ENCODE measurements at regions of chr3 and their contacts with region 1.

Region 1: DNA sequence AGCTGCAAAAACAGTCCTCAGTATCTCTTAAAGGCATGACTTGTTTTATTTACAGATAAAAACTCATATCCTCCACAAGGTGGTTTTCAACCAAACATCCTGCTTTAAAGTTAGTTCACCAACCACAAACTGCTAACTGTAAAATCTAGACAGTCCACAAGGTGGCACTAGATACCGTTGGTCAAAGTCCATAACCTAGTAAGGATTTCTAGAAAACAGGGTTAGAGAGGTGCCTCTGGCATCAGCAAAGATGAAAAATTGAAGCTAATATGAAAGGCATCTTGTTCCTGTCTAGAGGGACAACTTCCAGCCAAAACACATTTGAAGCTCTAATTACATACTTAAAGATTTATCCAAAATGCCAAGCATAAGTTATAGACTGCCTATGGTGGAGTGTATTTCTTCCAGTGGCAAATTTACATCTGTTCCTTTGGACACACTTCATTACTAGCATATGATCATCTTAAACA is 56.0 kb downstream of the ZMAT3 start:
- DNase-seq: peak; percentile 49
- H3K4me3 Mint-ChIP-seq: no peak overlapping the region
- H3K27ac Mint-ChIP-seq: peak overlapping the region; percentile 44
- H3K4me1 Mint-ChIP-seq: peaks cover 33% of the 10 kb centered on the region
- H3K27me3 Mint-ChIP-seq: no peaks in the 10 kb centered on the region

Region 2: GRCh38 chr3:178986456-178986855 is 29.1 kb before region 1 on chr3:
- CTCF ChIA-PET with region 1: no interaction called
- POLR2A ChIA-PET with region 1: no interaction called
- intact Hi-C with region 1: no loop called
- DNase-seq: no peak
- H3K4me3 Mint-ChIP-seq: no peak overlapping the region
- H3K27ac Mint-ChIP-seq: no peak overlapping the region
- H3K4me1 Mint-ChIP-seq: no peaks in the 10 kb centered on the region
- H3K27me3 Mint-ChIP-seq: no peaks in the 10 kb centered on the region

Region 3: GRCh38 chr3:179000144-179000543 is 15.4 kb before region 1 on chr3:
- CTCF ChIA-PET with region 1: interaction called, 6 read pairs
- POLR2A ChIA-PET with region 1: interaction called, 4 read pairs
- intact Hi-C with region 1: loop called (anchors 1 kb)
- DNase-seq: no peak
- H3K4me3 Mint-ChIP-seq: no peak overlapping the region
- H3K27ac Mint-ChIP-seq: no peak overlapping the region
- H3K4me1 Mint-ChIP-seq: peaks cover 9% of the 10 kb centered on the region
- H3K27me3 Mint-ChIP-seq: peaks cover 2% of the 10 kb centered on the region

Region 4: GRCh38 chr3:179037351-179037750 is 21.8 kb after region 1 on chr3:
- CTCF ChIA-PET with region 1: interaction called, 12 read pairs
- POLR2A ChIA-PET with region 1: no interaction called
- intact Hi-C with region 1: loop called (anchors 1 kb)
- DNase-seq: peak; percentile 84
- H3K4me3 Mint-ChIP-seq: peak overlapping the region; percentile 55
- H3K27ac Mint-ChIP-seq: peak overlapping the region; percentile 71
- H3K4me1 Mint-ChIP-seq: peaks cover 9% of the 10 kb centered on the region
- H3K27me3 Mint-ChIP-seq: no peaks in the 10 kb centered on the region

Region 5: DNA sequence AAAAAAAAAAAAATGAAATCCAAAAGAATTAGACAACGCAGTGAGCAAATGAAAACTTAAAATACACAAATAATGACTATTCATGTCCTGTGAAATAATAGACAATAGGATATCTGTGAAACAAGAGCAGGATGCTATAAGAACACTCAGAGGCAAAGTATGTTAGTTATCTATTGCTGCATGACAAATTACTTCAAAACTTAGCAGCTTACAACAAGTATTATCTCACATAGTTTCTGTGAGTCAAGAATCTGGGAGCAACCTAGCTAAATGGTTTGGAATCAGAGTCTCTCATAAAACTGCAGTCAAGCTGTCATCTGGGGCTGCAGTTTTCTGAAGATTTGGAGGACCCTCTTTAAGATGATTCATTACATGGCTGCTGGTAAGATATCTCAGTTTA is 92.5 kb after region 1 on chr3:
- CTCF ChIA-PET with region 1: interaction called, 6 read pairs
- POLR2A ChIA-PET with region 1: no interaction called
- intact Hi-C with region 1: loop called (anchors 1 kb)
- DNase-seq: no peak
- H3K4me3 Mint-ChIP-seq: no peak overlapping the region
- H3K27ac Mint-ChIP-seq: no peak overlapping the region
- H3K4me1 Mint-ChIP-seq: peaks cover 2% of the 10 kb centered on the region
- H3K27me3 Mint-ChIP-seq: peaks cover 11% of the 10 kb centered on the region

Region 6: GRCh38 chr3:179196098-179196497 is 180.5 kb after region 1 on chr3:
- CTCF ChIA-PET with region 1: no interaction called
- POLR2A ChIA-PET with region 1: no interaction called
- intact Hi-C with region 1: loop called (anchors 5 kb)
- DNase-seq: no peak
- H3K4me3 Mint-ChIP-seq: no peak overlapping the region
- H3K27ac Mint-ChIP-seq: peak overlapping the region; percentile 18
- H3K4me1 Mint-ChIP-seq: peaks cover 40% of the 10 kb centered on the region
- H3K27me3 Mint-ChIP-seq: no peaks in the 10 kb centered on the region

Region 7: GRCh38 chr3:179355996-179356395 is 340.4 kb after region 1 on chr3:
- CTCF ChIA-PET with region 1: no interaction called
- POLR2A ChIA-PET with region 1: no interaction called
- intact Hi-C with region 1: no loop called
- DNase-seq: no peak
- H3K4me3 Mint-ChIP-seq: no peak overlapping the region
- H3K27ac Mint-ChIP-seq: peak overlapping the region; percentile 33
- H3K4me1 Mint-ChIP-seq: peaks cover 19% of the 10 kb centered on the region
- H3K27me3 Mint-ChIP-seq: no peaks in the 10 kb centered on the region